OCI-LY7 (cell line): ENCODE measurements at regions of chr6 and their contacts with region 1.

Region 1: GRCh38 chr6:52605610-52606185 is 28.8 kb upstream of the TRAM2 start:
- DNase-seq: no peak
- H3K4me3 ChIP-seq: no peak overlapping the region
- H3K27ac ChIP-seq: no peak overlapping the region
- H3K4me1 ChIP-seq: peaks cover 17% of the 10 kb centered on the region
- CTCF ChIP-seq: no peak

Region 2: GRCh38 chr6:52635049-52635577 is 29.4 kb after region 1 on chr6:
- CTCF ChIA-PET with region 1: no interaction called
- POLR2A ChIA-PET with region 1: interaction called, 16 read pairs
- intact Hi-C with region 1: no loop called
- DNase-seq: no peak
- H3K4me3 ChIP-seq: no peak overlapping the region
- H3K27ac ChIP-seq: no peak overlapping the region
- H3K4me1 ChIP-seq: no peaks in the 10 kb centered on the region
- CTCF ChIP-seq: no peak

Region 3: DNA sequence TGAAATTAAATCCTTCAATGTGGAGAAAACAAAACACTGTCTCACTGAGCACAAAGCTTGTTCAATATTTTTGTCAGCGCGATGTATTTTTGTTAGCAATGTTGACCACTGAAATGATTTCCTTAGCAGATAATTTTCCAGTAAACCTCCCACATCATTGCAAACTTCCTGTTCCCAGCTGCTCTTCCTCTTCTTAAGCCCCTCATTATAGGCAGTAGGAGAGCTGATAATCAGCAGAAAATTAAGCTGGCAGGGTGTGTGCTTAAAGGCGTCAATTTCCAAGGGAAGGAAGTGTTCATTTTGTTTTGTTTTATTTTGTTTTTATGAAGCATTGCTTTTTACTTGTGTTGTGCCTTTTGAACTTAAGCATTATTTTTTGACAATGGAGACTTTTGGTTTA is 36.1 kb after region 1 on chr6:
- CTCF ChIA-PET with region 1: no interaction called
- POLR2A ChIA-PET with region 1: interaction called, 10 read pairs
- intact Hi-C with region 1: no loop called
- DNase-seq: no peak
- H3K4me3 ChIP-seq: no peak overlapping the region
- H3K27ac ChIP-seq: no peak overlapping the region
- H3K4me1 ChIP-seq: no peaks in the 10 kb centered on the region
- CTCF ChIP-seq: no peak